Transverse colon (tissue), 4 donors: ENCODE measurements at regions of chr9 and their contacts with region 1.

Region 1: DNA sequence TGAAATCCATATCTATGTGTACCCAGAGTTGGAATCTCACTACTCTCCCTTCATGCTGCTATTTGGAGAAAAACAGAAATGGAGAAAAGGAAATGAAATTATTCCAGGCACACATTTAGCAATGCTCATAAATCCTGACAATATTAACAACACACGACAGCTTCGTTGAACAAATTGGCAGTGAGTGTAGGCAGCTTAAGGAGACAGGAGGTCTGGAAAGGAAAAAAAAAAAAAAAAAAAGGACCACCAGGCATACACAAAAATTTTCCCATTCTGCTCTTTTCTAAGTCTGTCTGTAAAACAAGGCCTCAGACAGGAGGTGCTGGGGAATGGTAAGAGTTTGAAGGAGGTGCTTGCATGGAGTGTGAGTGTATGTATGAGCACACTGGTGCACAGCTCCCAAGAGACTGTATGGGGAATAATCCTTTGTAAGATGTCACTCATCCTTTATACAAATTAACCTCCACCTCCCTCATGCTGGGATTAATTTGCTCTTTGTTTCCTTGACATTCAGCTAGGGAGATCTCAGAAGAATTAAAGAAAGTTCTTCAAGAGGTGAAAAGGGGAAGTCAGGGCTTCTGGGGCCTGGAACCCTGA is 78.9 kb downstream of the ASTN2 start:
- DNase-seq: no peak
- H3K4me3 ChIP-seq: no peak overlapping the region
- H3K27ac ChIP-seq: no peak overlapping the region
- H3K4me1 ChIP-seq: no peaks in the 10 kb centered on the region
- H3K27me3 ChIP-seq: no peaks in the 10 kb centered on the region
- CTCF ChIP-seq: no peak
- EP300 ChIP-seq: no peak
- POLR2A ChIP-seq: no peak

Region 2: DNA sequence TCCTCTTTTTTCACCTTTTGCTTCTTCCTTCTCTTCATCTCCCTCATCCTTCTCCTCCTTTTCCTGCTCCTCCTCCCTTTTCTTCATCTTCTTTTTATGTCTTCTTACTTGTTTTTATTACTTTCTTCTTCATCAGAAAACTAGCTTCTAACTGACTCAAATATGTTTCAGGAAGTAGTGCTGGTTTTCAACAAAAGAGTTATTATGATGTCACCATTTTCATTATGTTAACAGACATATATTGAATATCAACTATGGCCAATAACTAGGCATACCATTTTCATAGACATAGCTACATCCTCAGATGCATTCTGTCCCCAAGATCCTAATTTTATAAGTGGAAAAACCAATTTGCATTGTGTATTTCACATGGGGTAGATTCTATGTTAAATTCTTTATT is 1435.2 kb before region 1 on chr9:
- in situ Hi-C with region 1: no loop called
- intact Hi-C with region 1: loop called (anchors 5 kb)
- DNase-seq: no peak
- H3K4me3 ChIP-seq: no peak overlapping the region
- H3K27ac ChIP-seq: no peak overlapping the region
- H3K4me1 ChIP-seq: no peaks in the 10 kb centered on the region
- H3K27me3 ChIP-seq: no peaks in the 10 kb centered on the region
- CTCF ChIP-seq: no peak
- EP300 ChIP-seq: no peak
- POLR2A ChIP-seq: no peak

Region 3: DNA sequence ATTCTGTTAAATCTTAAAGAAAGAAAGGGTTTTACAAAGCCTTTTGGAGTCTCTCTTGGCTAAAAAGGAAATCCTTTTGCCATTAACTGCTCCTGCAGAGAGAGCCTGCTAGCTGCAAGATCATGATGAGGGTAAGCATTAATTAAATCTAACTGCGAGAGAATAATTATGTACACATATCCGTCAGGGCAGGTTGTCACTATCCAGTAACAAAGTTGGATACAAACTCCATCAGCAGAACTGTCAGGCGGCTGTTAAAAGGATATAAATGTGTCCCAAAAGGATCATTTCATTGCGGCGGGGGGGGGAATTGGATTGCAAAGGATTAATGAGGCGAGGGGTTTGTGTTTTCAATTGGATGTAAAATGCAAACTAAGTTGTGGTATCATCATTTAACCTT is 210.4 kb before region 1 on chr9:
- in situ Hi-C with region 1: no loop called
- intact Hi-C with region 1: no loop called
- DNase-seq: no peak
- H3K4me3 ChIP-seq: no peak overlapping the region
- H3K27ac ChIP-seq: no peak overlapping the region
- H3K4me1 ChIP-seq: no peaks in the 10 kb centered on the region
- H3K27me3 ChIP-seq: no peaks in the 10 kb centered on the region
- CTCF ChIP-seq: no peak
- EP300 ChIP-seq: no peak
- POLR2A ChIP-seq: no peak

Region 4: GRCh38 chr9:117224695-117225094 is 111.2 kb before region 1 on chr9:
- in situ Hi-C with region 1: no loop called
- intact Hi-C with region 1: no loop called
- DNase-seq: no peak
- H3K4me3 ChIP-seq: no peak overlapping the region
- H3K27ac ChIP-seq: no peak overlapping the region
- H3K4me1 ChIP-seq: no peaks in the 10 kb centered on the region
- H3K27me3 ChIP-seq: no peaks in the 10 kb centered on the region
- CTCF ChIP-seq: no peak
- EP300 ChIP-seq: no peak
- POLR2A ChIP-seq: no peak